ENCODE measurements at regions of chr7 and their contacts with region 1.

Region 1: GRCh38 chr7:111752022-111752582 is 189.8 kb upstream of the IMMP2L start:
- DNase-seq: peak; percentile 86

Region 2: DNA sequence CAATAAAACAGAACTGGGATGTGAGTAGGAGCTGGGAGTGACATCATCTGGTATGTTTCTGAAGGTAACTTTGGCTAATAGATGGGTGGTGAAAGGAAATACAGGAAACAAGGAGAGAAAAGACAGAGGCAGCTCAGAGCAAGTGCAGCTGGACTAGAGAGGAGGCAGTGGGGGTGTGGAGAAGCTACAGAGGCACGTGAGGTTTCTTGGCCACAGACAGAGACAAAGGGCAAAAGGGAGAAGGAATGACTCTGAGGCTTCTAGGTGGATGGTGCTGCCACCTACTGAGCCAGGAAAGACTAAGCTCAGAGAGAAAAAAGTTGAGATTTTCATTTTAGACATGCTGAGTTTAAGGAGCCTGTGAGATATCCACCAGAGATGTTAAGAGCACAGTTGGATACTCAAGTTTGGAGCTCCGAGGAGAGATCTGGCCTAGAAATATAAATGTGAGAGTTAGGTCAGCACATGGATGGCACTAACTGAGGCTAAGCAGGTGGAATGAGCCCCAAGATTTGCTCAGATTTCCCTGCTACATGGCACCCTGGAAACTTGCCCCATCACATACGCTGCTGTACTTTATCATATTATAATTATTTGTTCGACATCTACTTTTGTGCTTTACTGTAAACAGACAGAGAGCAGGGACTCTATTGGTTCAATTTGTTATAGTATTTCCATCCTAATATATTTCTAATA is 103.2 kb after region 1 on chr7:
- in situ Hi-C with region 1: loop called (anchors 25 kb)
- DNase-seq: peak; percentile 63

Region 3: GRCh38 chr7:112422842-112423496 is 670.9 kb after region 1 on chr7:
- in situ Hi-C with region 1: loop called (anchors 25 kb)
- DNase-seq: peak; percentile 78

Region 4: GRCh38 chr7:112495810-112496462 is 743.8 kb after region 1 on chr7:
- in situ Hi-C with region 1: loop called (anchors 25 kb)
- DNase-seq: peak; percentile 54